Activated CD8-positive, alpha-beta T cell treated with anti-CD3 and anti-CD28 coated beads, Interleukin-2, amount 10 ng/mL, durations not matched to agents 7 days and 5 days (primary cell): ENCODE measurements at regions of chr1 and their contacts with region 1.

Region 1: GRCh38 chr1:24964811-24965570 is 34.9 kb upstream of the RUNX3 start:
- DNase-seq: peak; percentile 99
- ATAC-seq: peak; percentile 81
- H3K4me3 Mint-ChIP-seq: peak overlapping the region; percentile 92
- H3K27ac Mint-ChIP-seq: peak overlapping the region; percentile 98
- H3K4me1 Mint-ChIP-seq: peaks cover 67% of the 10 kb centered on the region
- H3K27me3 Mint-ChIP-seq: no peaks in the 10 kb centered on the region

Region 2: GRCh38 chr1:24847995-24848881 is 116.8 kb before region 1 on chr1:
- CTCF ChIA-PET with region 1: interaction called, 11 read pairs
- POLR2A ChIA-PET with region 1: no interaction called
- DNase-seq: peak; percentile 94
- ATAC-seq: peak; percentile 98
- H3K4me3 Mint-ChIP-seq: peak overlapping the region; percentile 56
- H3K27ac Mint-ChIP-seq: peak overlapping the region; percentile 70
- H3K4me1 Mint-ChIP-seq: peaks cover 24% of the 10 kb centered on the region
- H3K27me3 Mint-ChIP-seq: peaks cover 47% of the 10 kb centered on the region

Region 3: GRCh38 chr1:24981631-24982005 is 16.6 kb after region 1 on chr1:
- CTCF ChIA-PET with region 1: interaction called, 48 read pairs
- POLR2A ChIA-PET with region 1: interaction called, 9 read pairs
- DNase-seq: peak; percentile 70
- ATAC-seq: peak; percentile 52
- H3K4me3 Mint-ChIP-seq: peak overlapping the region; percentile 63
- H3K27ac Mint-ChIP-seq: peak overlapping the region; percentile 93
- H3K4me1 Mint-ChIP-seq: peaks cover 93% of the 10 kb centered on the region
- H3K27me3 Mint-ChIP-seq: no peaks in the 10 kb centered on the region

Region 4: GRCh38 chr1:24996983-24997893 is 32.2 kb after region 1 on chr1:
- CTCF ChIA-PET with region 1: interaction called, 77 read pairs
- POLR2A ChIA-PET with region 1: interaction called, 106 read pairs
- DNase-seq: peak; percentile 96
- ATAC-seq: peak; percentile 80
- H3K4me3 Mint-ChIP-seq: peak overlapping the region; percentile 66
- H3K27ac Mint-ChIP-seq: peak overlapping the region; percentile 96
- H3K4me1 Mint-ChIP-seq: peaks cover 92% of the 10 kb centered on the region
- H3K27me3 Mint-ChIP-seq: no peaks in the 10 kb centered on the region

Region 5: GRCh38 chr1:25022361-25023189 is 57.6 kb after region 1 on chr1:
- CTCF ChIA-PET with region 1: interaction called, 22 read pairs
- POLR2A ChIA-PET with region 1: interaction called, 50 read pairs
- DNase-seq: peak; percentile 98
- ATAC-seq: peak; percentile 89
- H3K4me3 Mint-ChIP-seq: peak overlapping the region; percentile 78
- H3K27ac Mint-ChIP-seq: peak overlapping the region; percentile 88
- H3K4me1 Mint-ChIP-seq: peaks cover 96% of the 10 kb centered on the region
- H3K27me3 Mint-ChIP-seq: no peaks in the 10 kb centered on the region

Region 6: DNA sequence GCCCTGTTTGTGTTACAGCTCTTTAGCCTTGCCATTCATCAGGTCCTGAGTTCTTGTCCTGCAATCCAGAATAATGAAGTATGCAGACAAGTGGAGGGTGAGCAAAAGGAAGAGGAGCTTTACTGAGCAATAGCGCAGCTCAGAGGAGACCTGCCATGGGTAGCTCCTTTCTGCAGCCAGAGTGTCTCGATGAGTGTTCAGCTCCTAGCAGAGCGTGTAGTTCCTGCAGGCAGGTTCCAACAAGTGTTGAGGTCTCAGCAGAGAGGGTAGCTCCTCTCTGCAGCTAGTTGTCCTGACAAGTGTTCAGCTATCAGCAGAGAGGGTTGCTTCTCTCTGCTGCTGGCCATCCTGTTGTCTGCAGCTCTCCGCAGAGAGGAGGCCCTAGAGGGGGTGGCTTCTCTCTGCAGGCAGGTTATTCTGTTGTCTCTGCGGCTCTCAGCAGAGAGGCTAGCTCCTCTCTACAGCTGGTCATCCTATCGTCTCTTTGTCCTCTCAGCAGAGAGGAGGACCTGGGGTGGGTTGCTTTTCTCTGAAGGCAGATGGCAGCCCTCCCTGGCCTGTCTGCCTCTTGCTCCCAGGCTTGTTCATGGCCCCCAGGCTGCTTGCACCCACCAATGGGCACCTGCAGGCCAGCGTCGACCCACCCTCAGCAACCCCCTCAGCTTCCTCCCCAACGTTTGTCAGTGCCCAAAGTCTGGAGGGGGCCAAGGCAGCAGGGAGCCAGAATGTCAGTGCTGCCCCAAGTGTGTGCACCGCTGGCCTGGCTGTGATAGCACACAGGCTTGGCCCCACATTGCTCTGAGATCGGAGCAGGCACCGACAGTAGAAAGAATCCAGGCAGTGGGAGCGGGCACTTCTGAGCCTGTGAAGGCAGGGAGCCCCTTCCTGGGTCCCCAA is 77.6 kb after region 1 on chr1:
- CTCF ChIA-PET with region 1: interaction called, 225 read pairs
- POLR2A ChIA-PET with region 1: interaction called, 96 read pairs
- DNase-seq: no peak
- ATAC-seq: no peak
- H3K4me3 Mint-ChIP-seq: no peak overlapping the region
- H3K27ac Mint-ChIP-seq: no peak overlapping the region
- H3K4me1 Mint-ChIP-seq: peaks cover 25% of the 10 kb centered on the region
- H3K27me3 Mint-ChIP-seq: peaks cover 7% of the 10 kb centered on the region